Left colon (tissue), 2 donors: ENCODE measurements at regions of chr11 and their contacts with region 1.

Region 1: GRCh38 chr11:73184953-73185671 is 33.0 kb upstream of the P2RY2 start:
- DNase-seq: peak; percentile 71 to 79
- ATAC-seq: peak; percentile 81

Region 2: GRCh38 chr11:72722050-72722748 is 462.9 kb before region 1 on chr11:
- intact Hi-C with region 1: loop called in 1 of 2 experiments (anchors 10 kb)
- DNase-seq: peak; percentile 89 to 90
- ATAC-seq: peak; percentile 84

Region 3: GRCh38 chr11:72924568-72925190 is 260.4 kb before region 1 on chr11:
- intact Hi-C with region 1: loop called in 1 of 2 experiments (anchors 5 kb)
- DNase-seq: no peak
- ATAC-seq: peak; percentile 50

Region 4: DNA sequence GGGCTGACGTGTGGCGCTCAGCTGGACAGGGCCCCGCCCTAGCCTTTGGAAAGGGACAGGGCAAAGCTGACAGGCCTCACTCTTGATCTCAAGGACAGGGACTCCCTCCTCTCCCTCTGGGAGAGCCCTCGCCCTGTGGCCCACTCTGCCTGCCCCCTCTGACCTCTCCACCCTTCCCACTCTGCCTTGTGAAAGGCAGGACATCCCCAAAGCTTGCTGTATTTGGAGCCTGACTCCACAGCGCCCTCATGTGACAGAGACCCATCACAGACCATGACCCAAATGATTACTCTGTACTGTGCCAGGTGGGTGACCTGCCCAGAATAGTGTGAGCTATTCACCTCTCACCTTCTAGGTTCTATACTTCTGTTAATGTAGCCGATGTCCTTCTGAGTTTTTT is 51.7 kb after region 1 on chr11:
- intact Hi-C with region 1: loop called (anchors 2 to 10 kb)
- DNase-seq: peak; percentile 41 to 70
- ATAC-seq: peak; percentile 72

Region 5: DNA sequence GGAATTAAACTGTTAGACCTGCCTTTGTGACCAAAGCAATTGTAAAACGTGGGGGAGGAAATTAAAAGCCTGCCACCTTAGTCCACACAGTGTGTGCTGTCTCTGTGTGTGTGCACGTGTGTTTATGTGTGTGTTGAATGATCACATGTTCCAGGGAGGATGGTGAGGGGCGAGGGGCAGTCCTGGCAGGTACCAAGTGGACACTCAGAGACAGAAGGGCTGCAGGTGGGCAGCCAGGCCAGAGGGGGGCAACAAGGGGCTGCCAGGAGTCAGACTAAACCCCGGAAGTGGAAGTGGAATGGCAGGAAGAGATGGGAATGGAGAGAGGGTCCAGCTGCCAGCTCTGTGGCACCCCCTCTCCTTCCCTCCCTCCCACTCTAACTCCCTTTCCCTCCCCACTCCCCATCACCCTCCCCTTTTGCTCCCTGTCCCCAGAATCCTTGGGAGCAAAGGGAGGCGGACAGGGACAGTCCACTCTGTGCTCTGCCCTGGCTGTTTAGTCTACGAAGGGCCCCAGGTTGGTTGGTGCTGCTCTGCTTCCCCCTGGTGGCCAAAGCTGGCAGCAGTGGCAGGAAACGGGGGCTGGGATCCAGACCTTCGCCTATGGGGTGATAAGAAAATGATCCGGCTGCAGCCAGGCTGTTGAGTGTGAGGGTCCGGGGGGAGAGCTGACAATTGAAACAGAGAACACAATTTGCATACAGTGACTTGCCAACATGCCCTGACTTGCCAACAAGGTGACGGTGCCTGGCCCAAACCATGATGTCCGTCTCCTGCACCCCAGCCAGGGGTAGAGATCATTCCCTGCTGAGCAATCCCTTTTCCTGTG is 57.4 kb after region 1 on chr11:
- intact Hi-C with region 1: loop called (anchors 2 to 10 kb)
- DNase-seq: peak; percentile 64 to 81
- ATAC-seq: peak; percentile 89